T-cell (primary cell): ENCODE measurements at regions of chr12 and their contacts with region 1.

Region 1: GRCh38 chr12:8045952-8046944 is 13.7 kb downstream of the FOXJ2 start:
- DNase-seq: peak; percentile 52 to 89 (median 78)
- ATAC-seq: peak; percentile 65 to 82 (median 78)
- H3K4me3 ChIP-seq: no peak overlapping the region
- H3K4me3 Mint-ChIP-seq: no peak overlapping the region
- H3K27ac ChIP-seq: no peak overlapping the region
- H3K27ac Mint-ChIP-seq: no peak overlapping the region
- H3K4me1 ChIP-seq: no peaks in the 10 kb centered on the region
- H3K4me1 Mint-ChIP-seq: peaks cover 8 to 10% (median 10%) of the 10 kb centered on the region in 3 donors
- H3K27me3 ChIP-seq: no peaks in the 10 kb centered on the region
- H3K27me3 Mint-ChIP-seq: no peaks in the 10 kb centered on the region

Region 2: DNA sequence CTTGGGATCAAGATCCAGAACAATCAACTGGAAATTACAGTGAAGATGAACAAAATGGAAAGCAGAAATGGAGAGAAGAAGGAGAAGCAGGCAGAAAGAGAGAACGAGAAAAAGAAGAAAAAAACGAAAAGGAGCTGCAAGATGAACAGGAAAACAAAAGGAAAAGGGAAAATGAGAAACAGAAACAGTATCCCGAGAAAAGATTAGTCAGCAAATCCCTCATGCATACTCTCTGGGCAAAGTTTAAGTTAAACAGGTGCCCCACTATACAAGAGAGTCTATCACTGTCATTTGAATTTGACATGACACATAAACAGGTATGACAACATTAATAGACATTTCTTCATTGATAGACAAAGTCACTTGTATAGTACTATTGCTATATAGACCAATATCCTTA is 276.2 kb before region 1 on chr12:
- CTCF ChIA-PET with region 1: no interaction called
- POLR2A ChIA-PET with region 1: no interaction called
- DNase-seq: no peak
- ATAC-seq: no peak
- H3K4me3 ChIP-seq: no peak overlapping the region
- H3K4me3 Mint-ChIP-seq: no peak overlapping the region
- H3K27ac ChIP-seq: no peak overlapping the region
- H3K27ac Mint-ChIP-seq: no peak overlapping the region
- H3K4me1 ChIP-seq: no peaks in the 10 kb centered on the region
- H3K4me1 Mint-ChIP-seq: no peaks in the 10 kb centered on the region
- H3K27me3 ChIP-seq: no peaks in the 10 kb centered on the region
- H3K27me3 Mint-ChIP-seq: peaks cover 3 to 8% of the 10 kb centered on the region in 2 donors

Region 3: DNA sequence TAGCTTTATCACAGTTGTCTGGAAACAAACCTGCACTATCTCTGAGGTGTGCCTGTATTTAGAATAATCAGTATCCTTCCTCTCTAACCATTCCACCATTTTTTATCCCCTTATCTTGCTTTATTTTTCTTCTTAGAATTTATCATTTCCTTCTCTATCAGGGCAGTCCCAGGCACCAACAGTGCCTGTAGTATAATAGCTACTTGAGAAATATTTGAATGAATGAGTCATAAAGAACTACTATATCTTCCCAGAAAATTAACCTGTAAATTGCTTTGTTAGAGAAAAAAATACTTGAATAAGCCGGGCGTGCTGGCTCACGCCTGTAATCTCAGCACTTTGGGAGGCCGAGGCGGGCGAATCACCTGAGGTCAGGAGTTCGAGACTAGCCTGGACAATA is 34.9 kb before region 1 on chr12:
- CTCF ChIA-PET with region 1: no interaction called
- POLR2A ChIA-PET with region 1: no interaction called
- DNase-seq: no peak
- ATAC-seq: no peak
- H3K4me3 ChIP-seq: no peak overlapping the region
- H3K4me3 Mint-ChIP-seq: no peak overlapping the region
- H3K27ac ChIP-seq: no peak overlapping the region
- H3K27ac Mint-ChIP-seq: no peak overlapping the region
- H3K4me1 ChIP-seq: no peaks in the 10 kb centered on the region
- H3K4me1 Mint-ChIP-seq: no peaks in the 10 kb centered on the region
- H3K27me3 ChIP-seq: peaks cover 0 to 28% of the 10 kb centered on the region in 2 experiments
- H3K27me3 Mint-ChIP-seq: peaks cover 21 to 23% of the 10 kb centered on the region in 2 donors

Region 4: GRCh38 chr12:8032242-8033152 is 13.8 kb before region 1 on chr12 and contains the start of gene FOXJ2:
- CTCF ChIA-PET with region 1: interaction called, 11 to 12 read pairs
- POLR2A ChIA-PET with region 1: interaction called, 3 to 4 read pairs
- DNase-seq: peak; percentile 60 to 88 (median 76)
- ATAC-seq: peak; percentile 81 to 91 (median 90)
- H3K4me3 ChIP-seq: peak within 1 kb of the TSS; percentile 81 to 82
- H3K4me3 Mint-ChIP-seq: peak within 1 kb of the TSS; percentile 84 to 93 (median 88)
- H3K27ac ChIP-seq: peak within 1 kb of the TSS; percentile 83
- H3K27ac Mint-ChIP-seq: peak within 1 kb of the TSS; percentile 89 to 91
- H3K4me1 ChIP-seq: peaks cover 16 to 60% of the 10 kb centered on the region in 2 experiments
- H3K4me1 Mint-ChIP-seq: peaks cover 45 to 54% (median 50%) of the 10 kb centered on the region in 3 donors
- H3K27me3 ChIP-seq: no peaks in the 10 kb centered on the region
- H3K27me3 Mint-ChIP-seq: no peaks in the 10 kb centered on the region
- total RNA-seq, gene FOXJ2: 24.5 to 31.9 (median 28.2) TPM